ENCODE measurements at regions of chr11 and their contacts with region 1.

Region 1: GRCh38 chr11:118198370-118198769 is 21.9 kb upstream of the SCN2B start:
- DNase-seq: peak; percentile 33 to 85
- H3K4me3 ChIP-seq: no peak overlapping the region
- H3K27ac ChIP-seq: no peak overlapping the region
- H3K4me1 ChIP-seq: peaks cover 2 to 14% (median 4%) of the 10 kb centered on the region in 4 experiments; a peak in 5 of 7 replicates
- H3K27me3 ChIP-seq: no peaks in the 10 kb centered on the region
- CTCF ChIP-seq: peak; percentile 79 to 86 (median 79)
- EP300 ChIP-seq: no peak
- POLR2A ChIP-seq: no peak
- RAD21 ChIP-seq: peak; percentile 90 to 93

Region 2: DNA sequence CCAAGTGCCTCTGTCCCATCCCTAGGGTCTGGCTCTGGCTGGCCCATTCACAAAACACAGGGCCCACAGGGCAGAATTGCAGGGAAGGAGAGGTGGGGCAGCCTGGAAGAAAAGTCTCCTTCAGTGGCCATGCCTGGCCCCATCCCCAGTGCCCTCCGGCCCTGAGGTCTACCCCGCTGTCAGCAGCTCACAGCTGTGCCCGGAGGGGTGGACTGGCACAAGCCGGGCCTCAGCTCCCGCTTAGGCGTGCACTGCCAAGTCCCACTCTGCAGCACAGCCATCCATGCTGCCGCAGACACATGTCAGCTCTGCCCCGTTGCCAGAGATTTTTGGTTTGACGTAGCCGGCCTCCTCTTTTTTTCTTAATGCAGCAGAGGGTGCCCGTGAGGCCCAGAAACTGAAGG is 18.1 kb before region 1 on chr11:
- CTCF ChIA-PET with region 1: interaction called, 20 read pairs
- POLR2A ChIA-PET with region 1: no interaction called
- DNase-seq: peak in 1 of 2 experiments; percentile 77
- H3K4me3 ChIP-seq: peak overlapping the region in 3 of 4 experiments; percentile 8 to 42 (median 10); a peak in 5 of 8 replicates
- H3K27ac ChIP-seq: no peak overlapping the region
- H3K4me1 ChIP-seq: peaks cover 7 to 21% (median 11%) of the 10 kb centered on the region in 4 experiments
- H3K27me3 ChIP-seq: peaks cover 0 to 8% (median 7%) of the 10 kb centered on the region in 4 experiments; a peak in 5 of 7 replicates
- CTCF ChIP-seq: peak in 2 of 3 experiments; percentile 8; a peak in 2 of 4 replicates
- EP300 ChIP-seq: no peak
- POLR2A ChIP-seq: no peak
- RAD21 ChIP-seq: peak; percentile 11 to 19; a peak in 1 of 4 replicates

Region 3: DNA sequence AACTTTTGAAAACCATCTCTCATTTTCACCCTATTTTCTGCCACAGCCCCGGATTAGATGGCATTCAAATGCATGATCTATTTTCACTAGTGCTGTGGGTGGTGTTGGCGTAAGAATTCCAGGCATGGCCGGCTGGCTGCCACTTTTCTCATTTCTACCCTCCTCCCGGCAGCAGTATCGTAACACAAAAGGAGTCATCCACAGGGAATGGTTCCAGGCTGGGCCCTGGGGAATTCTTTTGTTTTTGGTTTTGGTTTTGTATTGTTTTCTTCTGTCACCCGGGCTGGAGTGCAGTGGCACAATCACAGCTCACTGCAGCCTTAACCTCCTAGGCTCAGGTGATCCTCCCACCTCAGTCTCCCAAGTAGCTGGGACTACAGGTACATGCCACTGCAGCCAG is 12.6 kb after region 1 on chr11:
- CTCF ChIA-PET with region 1: interaction called, 38 read pairs
- POLR2A ChIA-PET with region 1: interaction called, 3 read pairs
- DNase-seq: peak; percentile 29 to 57
- H3K4me3 ChIP-seq: peak overlapping the region in 1 of 4 experiments; percentile 14; a peak in 1 of 8 replicates
- H3K27ac ChIP-seq: no peak overlapping the region
- H3K4me1 ChIP-seq: peaks cover 6 to 21% (median 20%) of the 10 kb centered on the region in 4 experiments; a peak in 6 of 7 replicates
- H3K27me3 ChIP-seq: peaks cover 0 to 2% (median 0%) of the 10 kb centered on the region in 4 experiments; a peak in 1 of 7 replicates
- CTCF ChIP-seq: no peak
- EP300 ChIP-seq: no peak
- POLR2A ChIP-seq: no peak
- RAD21 ChIP-seq: no peak

Region 4: GRCh38 chr11:118277306-118277705 is 78.9 kb after region 1 on chr11:
- CTCF ChIA-PET with region 1: interaction called, 12 read pairs
- POLR2A ChIA-PET with region 1: no interaction called
- DNase-seq: no peak
- H3K4me3 ChIP-seq: no peak overlapping the region
- H3K27ac ChIP-seq: no peak overlapping the region
- H3K4me1 ChIP-seq: no peaks in the 10 kb centered on the region
- H3K27me3 ChIP-seq: no peaks in the 10 kb centered on the region
- CTCF ChIP-seq: no peak
- EP300 ChIP-seq: no peak
- POLR2A ChIP-seq: no peak
- RAD21 ChIP-seq: no peak

Region 5: GRCh38 chr11:118290923-118291322 is 92.6 kb after region 1 on chr11:
- CTCF ChIA-PET with region 1: interaction called, 37 read pairs
- POLR2A ChIA-PET with region 1: no interaction called
- DNase-seq: no peak
- H3K4me3 ChIP-seq: no peak overlapping the region
- H3K27ac ChIP-seq: no peak overlapping the region
- H3K4me1 ChIP-seq: no peaks in the 10 kb centered on the region; a peak in 1 of 7 replicates
- H3K27me3 ChIP-seq: no peaks in the 10 kb centered on the region; a peak in 1 of 7 replicates
- CTCF ChIP-seq: peak in 2 of 3 experiments; percentile 59 to 65; a peak in 3 of 4 replicates
- EP300 ChIP-seq: no peak
- POLR2A ChIP-seq: no peak
- RAD21 ChIP-seq: peak; percentile 83 to 84

Measured in H1 (cell line).